ENCODE measurements at regions of chr12 and their contacts with region 1.

Region 1: DNA sequence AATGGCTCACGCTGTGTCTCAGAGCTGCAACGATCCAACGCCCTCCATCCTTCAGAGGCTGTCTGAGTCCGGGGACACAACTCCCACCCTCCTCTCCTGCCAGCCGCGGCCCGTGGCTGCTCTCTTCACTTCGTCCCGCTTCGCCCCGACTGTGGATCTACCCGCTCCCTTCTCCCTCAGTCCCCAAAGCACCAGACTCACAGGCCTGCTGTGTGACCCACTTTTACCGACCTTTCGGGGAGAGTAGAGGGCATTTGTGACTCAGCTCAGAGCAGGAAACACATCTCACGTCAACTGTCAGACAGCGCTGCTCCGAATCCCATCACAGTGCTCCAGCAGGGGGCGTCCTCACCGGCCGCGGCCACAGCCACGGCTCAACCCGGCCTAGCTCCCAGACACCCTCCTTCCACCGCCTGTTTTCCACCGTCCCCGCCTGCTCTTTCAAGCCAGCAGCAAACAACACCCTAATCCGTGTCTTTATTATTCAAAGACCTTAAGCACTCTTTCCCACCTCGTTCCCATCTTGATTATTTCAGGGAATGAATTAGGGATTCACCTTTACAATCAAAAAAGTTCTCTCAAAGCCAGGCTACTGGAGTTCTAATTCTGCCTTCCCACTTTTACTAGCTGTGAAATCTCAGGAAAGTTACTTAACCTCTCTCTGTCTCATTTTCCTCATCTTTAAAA is 5.0 kb upstream of the AQP2 start:
- DNase-seq: peak; percentile 89
- H3K4me3 ChIP-seq: no peak overlapping the region
- H3K27ac ChIP-seq: peak overlapping the region; percentile 49
- H3K4me1 ChIP-seq: peaks cover 11% of the 10 kb centered on the region
- H3K27me3 ChIP-seq: no peaks in the 10 kb centered on the region
- CTCF ChIP-seq: peak; percentile 96 to 97
- POLR2A ChIP-seq: no peak

Region 2: GRCh38 chr12:49892084-49892731 is 53.3 kb before region 1 on chr12:
- CTCF ChIA-PET with region 1: interaction called, 11 read pairs
- POLR2A ChIA-PET with region 1: no interaction called
- dilution Hi-C with region 1: no loop called
- intact Hi-C with region 1: no loop called
- DNase-seq: no peak
- H3K4me3 ChIP-seq: no peak overlapping the region
- H3K27ac ChIP-seq: no peak overlapping the region
- H3K4me1 ChIP-seq: peaks cover 6% of the 10 kb centered on the region
- H3K27me3 ChIP-seq: peaks cover 0 to 7% of the 10 kb centered on the region in 2 experiments
- CTCF ChIP-seq: no peak
- POLR2A ChIP-seq: no peak

Region 3: DNA sequence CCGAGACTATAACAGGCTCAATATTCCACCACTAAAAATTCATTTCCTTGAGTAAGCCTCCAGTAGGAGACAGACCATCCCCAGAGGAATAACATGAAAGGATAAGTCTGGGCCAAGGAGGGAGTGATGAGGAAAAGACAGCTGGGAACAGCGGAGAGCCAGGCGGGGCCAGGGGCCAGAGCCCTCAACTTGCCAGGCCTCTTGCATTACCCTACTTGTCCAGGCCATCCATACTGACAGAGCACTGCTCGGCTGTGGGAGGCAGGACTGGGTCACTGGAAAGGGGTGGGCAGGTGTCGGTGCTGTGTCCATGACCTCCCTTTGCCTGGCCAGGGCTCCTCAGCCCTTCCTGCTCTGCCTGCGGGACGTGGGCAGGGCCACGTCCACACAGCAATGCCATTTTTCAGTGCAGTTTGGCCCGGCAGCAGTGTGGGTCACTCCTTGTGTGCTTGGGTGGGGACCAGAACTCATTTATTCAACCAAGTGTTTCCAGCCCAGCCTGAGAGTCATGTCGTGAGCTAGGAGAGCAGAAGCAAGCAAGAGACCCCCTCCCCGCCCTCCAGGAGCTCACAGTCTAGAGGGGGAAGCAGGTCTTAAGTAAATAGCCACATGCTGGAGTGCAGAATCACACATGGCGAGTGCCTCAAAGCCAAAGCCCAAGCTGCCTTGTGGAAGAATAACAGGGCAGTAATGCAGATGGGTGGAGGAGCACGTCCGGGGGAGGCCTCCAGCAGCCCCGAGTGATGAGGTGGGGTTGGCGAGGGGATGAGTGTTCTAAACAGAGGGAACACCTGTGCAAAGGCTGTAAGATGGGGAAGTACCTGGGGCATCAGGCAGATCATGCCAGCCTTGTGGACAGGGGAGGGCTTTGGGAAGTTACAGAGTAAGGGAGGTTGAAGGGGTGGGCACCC is 32.9 kb before region 1 on chr12:
- CTCF ChIA-PET with region 1: interaction called, 15 read pairs
- POLR2A ChIA-PET with region 1: no interaction called
- dilution Hi-C with region 1: no loop called
- intact Hi-C with region 1: no loop called
- DNase-seq: no peak
- H3K4me3 ChIP-seq: no peak overlapping the region
- H3K27ac ChIP-seq: no peak overlapping the region
- H3K4me1 ChIP-seq: peaks cover 4% of the 10 kb centered on the region
- H3K27me3 ChIP-seq: no peaks in the 10 kb centered on the region
- CTCF ChIP-seq: no peak
- POLR2A ChIP-seq: no peak

Region 4: DNA sequence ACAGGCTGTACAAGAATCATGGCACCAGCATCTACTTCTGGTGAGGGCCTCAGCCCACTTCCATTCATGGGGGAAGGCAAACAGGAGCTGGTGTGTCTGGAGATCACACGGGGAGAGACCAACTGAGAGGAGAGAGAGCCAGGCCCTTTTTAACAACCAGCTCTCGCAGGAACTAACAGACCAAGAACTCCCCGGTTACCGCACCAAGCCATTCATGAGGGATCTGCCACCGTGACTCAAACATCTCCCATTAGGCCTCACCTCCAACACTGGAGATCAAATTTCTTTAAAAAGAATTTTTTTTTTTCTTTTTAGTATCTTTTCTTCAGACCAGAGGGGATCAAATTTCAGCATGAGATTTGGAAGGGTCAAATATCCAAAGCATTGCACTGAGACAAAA is 11.7 kb before region 1 on chr12:
- CTCF ChIA-PET with region 1: interaction called, 19 read pairs
- POLR2A ChIA-PET with region 1: no interaction called
- dilution Hi-C with region 1: no loop called
- intact Hi-C with region 1: no loop called
- DNase-seq: no peak
- H3K4me3 ChIP-seq: no peak overlapping the region
- H3K27ac ChIP-seq: no peak overlapping the region
- H3K4me1 ChIP-seq: no peaks in the 10 kb centered on the region
- H3K27me3 ChIP-seq: no peaks in the 10 kb centered on the region
- CTCF ChIP-seq: no peak
- POLR2A ChIP-seq: no peak

Region 5: GRCh38 chr12:49983892-49984291 is 38.4 kb after region 1 on chr12:
- CTCF ChIA-PET with region 1: interaction called, 13 read pairs
- POLR2A ChIA-PET with region 1: no interaction called
- dilution Hi-C with region 1: no loop called
- intact Hi-C with region 1: no loop called
- DNase-seq: peak; percentile 87
- H3K4me3 ChIP-seq: no peak overlapping the region
- H3K27ac ChIP-seq: peak overlapping the region; percentile 24
- H3K4me1 ChIP-seq: peaks cover 14% of the 10 kb centered on the region
- H3K27me3 ChIP-seq: no peaks in the 10 kb centered on the region
- CTCF ChIP-seq: no peak
- POLR2A ChIP-seq: no peak

Measured in endothelial cell of umbilical vein (primary cell).